Prostate gland (tissue), 2 donors: ENCODE measurements at regions of chr10 and their contacts with region 1.

Region 1: GRCh38 chr10:43436400-43437140 is at the start of gene ZNF487:
- DNase-seq: peak; percentile 82
- H3K4me3 ChIP-seq: peak within 1 kb of the TSS; percentile 62 to 82
- H3K27ac ChIP-seq: peak within 1 kb of the TSS; percentile 94 to 97
- H3K4me1 ChIP-seq: no peaks in the 10 kb centered on the region
- H3K27me3 ChIP-seq: no peaks in the 10 kb centered on the region
- CTCF ChIP-seq: peak in 2 of 4 experiments; percentile 12 to 37
- POLR2A ChIP-seq: peak; percentile 92
- total RNA-seq, gene ZNF487: 6.6 to 12.5 TPM

Region 2: DNA sequence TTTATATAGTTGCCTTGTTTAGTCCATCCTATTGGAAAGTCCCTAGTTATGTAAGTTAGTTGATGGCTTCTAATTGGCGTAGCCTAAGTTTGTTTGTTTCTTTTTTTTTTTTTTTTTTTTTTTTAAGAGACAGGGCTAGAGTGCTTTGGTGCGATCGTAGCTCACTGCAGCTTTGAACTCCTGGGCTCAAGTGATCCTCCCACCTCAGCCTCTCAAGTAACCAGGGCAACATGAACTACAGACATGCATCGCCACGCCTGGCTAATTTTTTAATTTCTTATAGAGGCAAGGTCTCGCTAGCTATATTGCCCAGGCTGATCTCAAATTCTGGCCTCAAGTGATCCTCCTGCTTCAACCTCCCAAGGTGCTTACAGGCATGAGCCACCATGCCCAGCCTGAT is 291.3 kb before region 1 on chr10:
- intact Hi-C with region 1: no loop called
- DNase-seq: no peak
- H3K4me3 ChIP-seq: no peak overlapping the region
- H3K27ac ChIP-seq: no peak overlapping the region
- H3K4me1 ChIP-seq: no peaks in the 10 kb centered on the region
- H3K27me3 ChIP-seq: no peaks in the 10 kb centered on the region
- CTCF ChIP-seq: no peak
- POLR2A ChIP-seq: no peak

Region 3: GRCh38 chr10:43372765-43373361 is 63.7 kb before region 1 on chr10:
- intact Hi-C with region 1: no loop called
- DNase-seq: no peak
- H3K4me3 ChIP-seq: no peak overlapping the region
- H3K27ac ChIP-seq: no peak overlapping the region
- H3K4me1 ChIP-seq: no peaks in the 10 kb centered on the region
- H3K27me3 ChIP-seq: no peaks in the 10 kb centered on the region
- CTCF ChIP-seq: no peak
- POLR2A ChIP-seq: no peak

Region 4: DNA sequence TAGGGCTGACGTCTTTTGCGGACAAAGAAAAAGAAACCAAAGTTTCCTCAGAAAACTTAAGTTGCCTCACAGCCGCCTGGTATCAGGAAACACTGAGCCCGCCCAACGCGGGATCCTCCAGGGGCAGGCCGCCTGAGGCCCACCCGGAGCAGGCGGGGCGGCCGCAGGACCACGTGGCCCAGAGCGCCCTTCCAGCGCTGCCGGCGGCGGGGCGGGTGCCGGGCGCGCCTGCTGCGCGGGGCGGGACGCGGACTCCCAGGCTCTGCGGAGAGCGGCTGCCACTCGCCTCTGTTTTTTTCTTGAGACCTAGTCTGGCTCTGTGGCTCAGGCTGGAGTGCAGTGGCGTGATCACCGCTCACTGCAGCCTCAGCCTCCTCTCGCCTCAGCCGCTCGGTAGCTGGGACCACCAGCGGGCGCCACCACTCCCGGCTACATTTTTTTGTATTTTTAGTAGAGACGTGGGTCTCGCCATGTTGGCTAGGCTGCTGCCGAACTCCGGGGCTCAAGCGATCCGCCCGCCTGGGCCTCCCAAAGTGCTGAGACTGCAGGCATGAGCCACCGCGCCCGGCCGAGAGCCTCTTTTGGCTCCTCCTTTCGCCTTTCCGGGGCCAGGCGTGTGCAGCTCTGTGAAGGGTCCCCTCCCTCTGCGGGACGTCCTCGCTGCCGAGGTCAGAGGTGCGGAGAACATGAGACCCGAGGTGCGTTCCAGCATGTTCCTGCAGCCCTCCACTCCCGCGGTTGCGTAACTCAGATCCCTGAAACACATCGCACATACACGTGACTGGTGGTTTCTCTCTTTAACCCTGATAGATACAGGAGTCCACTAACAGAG is 16.0 kb before region 1 on chr10:
- intact Hi-C with region 1: loop called (anchors 2 kb)
- DNase-seq: peak; percentile 68
- H3K4me3 ChIP-seq: peak overlapping the region; percentile 43 to 44
- H3K27ac ChIP-seq: peak overlapping the region; percentile 90 to 92
- H3K4me1 ChIP-seq: no peaks in the 10 kb centered on the region
- H3K27me3 ChIP-seq: no peaks in the 10 kb centered on the region
- CTCF ChIP-seq: no peak
- POLR2A ChIP-seq: peak; percentile 54

Region 5: GRCh38 chr10:43479275-43479674 is 42.7 kb after region 1 on chr10:
- intact Hi-C with region 1: no loop called
- DNase-seq: no peak
- H3K4me3 ChIP-seq: no peak overlapping the region
- H3K27ac ChIP-seq: no peak overlapping the region
- H3K4me1 ChIP-seq: no peaks in the 10 kb centered on the region
- H3K27me3 ChIP-seq: no peaks in the 10 kb centered on the region
- CTCF ChIP-seq: no peak
- POLR2A ChIP-seq: no peak